ENCODE measurements at regions of chr3 and their contacts with region 1.

Region 1: DNA sequence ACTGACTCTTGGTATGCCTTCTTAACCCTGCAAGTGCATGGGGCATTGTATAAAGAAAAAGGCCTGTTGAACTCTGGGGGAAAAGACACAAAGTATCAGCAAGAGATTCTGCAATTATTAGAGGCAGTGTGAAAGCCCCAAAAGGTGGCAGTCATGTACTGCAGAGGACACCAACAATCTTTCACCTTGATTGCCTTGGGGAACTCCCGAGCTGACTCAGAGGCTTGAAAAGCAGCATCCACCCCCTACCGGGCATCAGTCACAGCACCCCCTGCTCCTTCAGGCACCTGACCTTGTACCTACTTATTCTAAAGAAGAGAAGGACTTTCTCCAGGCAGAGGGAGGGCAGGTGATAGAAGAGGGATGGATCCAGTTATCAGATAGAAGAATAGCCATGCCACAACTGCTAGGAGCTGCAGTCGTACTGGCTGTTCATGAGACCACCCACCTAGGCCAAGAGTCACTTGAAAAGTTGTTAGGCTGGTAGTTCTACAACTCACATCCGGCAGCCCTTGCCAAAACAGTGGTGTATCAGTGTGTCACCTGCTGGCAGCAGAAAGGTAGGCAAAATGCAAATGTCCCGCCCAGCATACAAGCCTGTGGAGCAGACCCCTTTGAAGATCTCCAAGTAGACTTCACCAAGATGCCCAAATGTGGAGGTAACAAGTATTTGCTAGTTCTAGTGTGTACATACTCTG is 241.6 kb upstream of the CNTN6 start:
- DNase-seq: no peak
- ATAC-seq: peak; percentile 94
- H3K4me3 ChIP-seq: no peak overlapping the region
- H3K27ac ChIP-seq: no peak overlapping the region
- H3K4me1 ChIP-seq: no peaks in the 10 kb centered on the region
- H3K27me3 ChIP-seq: no peaks in the 10 kb centered on the region
- CTCF ChIP-seq: peak; percentile 21 to 58 (median 46); a peak in 3 of 6 replicates
- EP300 ChIP-seq: no peak
- POLR2A ChIP-seq: no peak
- RAD21 ChIP-seq: peak; percentile 52; the same call in 1 of the 2 replicates

Region 2: DNA sequence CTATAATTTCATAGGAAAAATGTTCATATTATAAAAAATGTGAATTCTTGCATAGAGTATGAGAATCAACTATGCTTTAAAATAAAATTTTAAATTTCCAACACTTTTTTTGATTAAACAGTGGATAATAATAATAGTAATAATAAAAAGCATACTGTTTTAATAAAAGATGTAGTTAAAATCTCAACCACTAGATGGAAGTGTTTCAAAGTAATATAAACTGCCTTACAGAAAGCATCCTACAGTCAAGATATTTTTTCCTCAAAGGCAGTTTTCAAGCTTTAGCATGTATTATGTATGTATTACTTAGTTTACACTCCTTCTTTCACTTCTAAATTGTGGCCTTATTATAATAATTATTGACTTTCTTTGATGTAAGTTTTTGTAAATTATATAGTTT is 437.2 kb before region 1 on chr3:
- CTCF ChIA-PET with region 1: interaction called, 6 read pairs
- POLR2A ChIA-PET with region 1: no interaction called
- RAD21 ChIA-PET with region 1: no interaction called
- SMC1A ChIA-PET with region 1: no interaction called
- in situ Hi-C with region 1: loop called (anchors 10 kb)
- intact Hi-C with region 1: loop called (anchors 2 kb)
- DNase-seq: no peak
- ATAC-seq: peak; percentile 48; the same call in 2 of the 3 replicates
- H3K4me3 ChIP-seq: no peak overlapping the region
- H3K27ac ChIP-seq: no peak overlapping the region
- H3K4me1 ChIP-seq: no peaks in the 10 kb centered on the region
- H3K27me3 ChIP-seq: no peaks in the 10 kb centered on the region
- CTCF ChIP-seq: peak in 2 of 3 experiments; percentile 14 to 16; a peak in 3 of 6 replicates
- EP300 ChIP-seq: no peak
- POLR2A ChIP-seq: no peak
- RAD21 ChIP-seq: 0 out of 2 replicates have a peak, but pooled peaks have one; percentile 23

Region 3: GRCh38 chr3:632572-633170 is 218.6 kb before region 1 on chr3:
- CTCF ChIA-PET with region 1: interaction called, 17 read pairs
- POLR2A ChIA-PET with region 1: no interaction called
- RAD21 ChIA-PET with region 1: interaction called, 3 read pairs
- SMC1A ChIA-PET with region 1: interaction called, 7 read pairs
- in situ Hi-C with region 1: no loop called
- intact Hi-C with region 1: loop called (anchors 1 kb)
- DNase-seq: no peak
- ATAC-seq: peak; percentile 79
- H3K4me3 ChIP-seq: no peak overlapping the region
- H3K27ac ChIP-seq: no peak overlapping the region
- H3K4me1 ChIP-seq: no peaks in the 10 kb centered on the region
- H3K27me3 ChIP-seq: no peaks in the 10 kb centered on the region
- CTCF ChIP-seq: peak; percentile 63 to 77 (median 68)
- EP300 ChIP-seq: no peak
- POLR2A ChIP-seq: no peak
- RAD21 ChIP-seq: peak; percentile 75

Region 4: DNA sequence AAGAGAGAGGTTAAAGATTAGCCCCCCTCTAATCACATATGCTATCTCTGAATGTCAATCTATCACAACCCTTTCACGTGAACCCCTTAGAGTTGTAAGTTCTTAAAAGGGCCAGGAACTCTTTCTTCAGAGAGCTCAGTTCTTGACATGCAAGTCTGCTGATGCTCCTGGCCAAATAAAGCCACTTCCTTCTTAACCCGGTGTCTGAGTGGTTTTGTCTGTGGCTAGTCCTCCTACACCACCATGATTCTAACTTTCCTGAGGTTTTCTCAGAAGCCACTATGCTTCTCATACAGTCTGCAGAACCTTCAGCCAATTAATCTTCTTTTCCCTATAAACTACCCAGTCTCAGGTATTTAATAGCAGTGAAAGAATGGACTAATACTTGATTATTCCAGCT is 10.5 kb after region 1 on chr3:
- CTCF ChIA-PET with region 1: interaction called, 11 read pairs
- POLR2A ChIA-PET with region 1: no interaction called
- RAD21 ChIA-PET with region 1: interaction called, 3 read pairs
- SMC1A ChIA-PET with region 1: interaction called, 3 read pairs
- in situ Hi-C with region 1: no loop called
- intact Hi-C with region 1: no loop called
- DNase-seq: no peak
- ATAC-seq: no peak
- H3K4me3 ChIP-seq: no peak overlapping the region
- H3K27ac ChIP-seq: no peak overlapping the region
- H3K4me1 ChIP-seq: no peaks in the 10 kb centered on the region
- H3K27me3 ChIP-seq: no peaks in the 10 kb centered on the region
- CTCF ChIP-seq: no peak
- EP300 ChIP-seq: no peak
- POLR2A ChIP-seq: no peak
- RAD21 ChIP-seq: no peak

Region 5: GRCh38 chr3:1048569-1048968 is 197.3 kb after region 1 on chr3:
- CTCF ChIA-PET with region 1: no interaction called
- POLR2A ChIA-PET with region 1: no interaction called
- RAD21 ChIA-PET with region 1: no interaction called
- SMC1A ChIA-PET with region 1: no interaction called
- in situ Hi-C with region 1: no loop called
- intact Hi-C with region 1: no loop called
- DNase-seq: no peak
- ATAC-seq: no peak
- H3K4me3 ChIP-seq: no peak overlapping the region
- H3K27ac ChIP-seq: no peak overlapping the region
- H3K4me1 ChIP-seq: no peaks in the 10 kb centered on the region
- H3K27me3 ChIP-seq: no peaks in the 10 kb centered on the region
- CTCF ChIP-seq: no peak
- EP300 ChIP-seq: no peak
- POLR2A ChIP-seq: no peak
- RAD21 ChIP-seq: no peak

Measured in GM12878 (cell line).